Activated CD4-positive, alpha-beta memory T cell treated with anti-CD3 and anti-CD28 coated beads, Interleukin-2, amount 10 ng/mL, durations not matched to agents 7 days and 5 days (primary cell): ENCODE measurements at regions of chr1 and their contacts with region 1.

Region 1: GRCh38 chr1:66242646-66243547 is 291.1 kb upstream of the SGIP1 start:
- DNase-seq: peak; percentile 82
- H3K4me3 Mint-ChIP-seq: no peak overlapping the region
- H3K27ac Mint-ChIP-seq: no peak overlapping the region
- H3K4me1 Mint-ChIP-seq: peaks cover 3% of the 10 kb centered on the region
- H3K27me3 Mint-ChIP-seq: peaks cover 6% of the 10 kb centered on the region

Region 2: DNA sequence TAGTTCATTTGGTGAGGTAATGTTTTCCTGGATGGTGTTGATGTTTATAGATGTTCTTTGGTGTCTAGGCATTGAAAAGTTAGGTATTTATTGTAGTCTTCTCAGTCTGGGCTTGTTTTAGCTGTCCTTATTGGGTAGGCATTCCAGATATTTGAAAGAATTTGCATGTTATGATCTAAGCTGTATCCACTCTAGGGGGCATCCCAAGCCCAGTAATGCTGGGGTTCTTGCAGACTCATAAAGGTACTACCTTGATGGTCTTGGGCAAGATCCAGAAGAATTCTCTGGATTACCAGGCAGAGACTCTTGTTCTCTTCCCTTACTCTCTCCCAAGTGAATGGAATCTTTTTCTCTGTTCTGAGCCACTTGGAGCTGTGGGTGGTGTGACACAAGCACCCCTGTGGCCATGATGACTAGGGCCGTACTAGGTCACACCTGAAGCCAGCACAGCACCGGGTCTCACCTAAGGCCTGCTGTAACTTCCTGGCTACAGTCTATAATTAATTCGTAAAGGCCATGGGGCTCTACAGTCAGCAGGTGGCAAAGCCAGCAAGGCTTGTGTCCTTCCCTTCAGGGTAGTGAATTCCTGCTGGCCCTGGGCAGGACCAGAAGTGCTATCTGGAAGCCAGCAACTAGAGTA is 525.0 kb before region 1 on chr1:
- CTCF ChIA-PET with region 1: interaction called, 13 read pairs
- POLR2A ChIA-PET with region 1: no interaction called
- DNase-seq: peak; percentile 20
- H3K4me3 Mint-ChIP-seq: no peak overlapping the region
- H3K27ac Mint-ChIP-seq: no peak overlapping the region
- H3K4me1 Mint-ChIP-seq: no peaks in the 10 kb centered on the region
- H3K27me3 Mint-ChIP-seq: peaks cover 33% of the 10 kb centered on the region

Region 3: DNA sequence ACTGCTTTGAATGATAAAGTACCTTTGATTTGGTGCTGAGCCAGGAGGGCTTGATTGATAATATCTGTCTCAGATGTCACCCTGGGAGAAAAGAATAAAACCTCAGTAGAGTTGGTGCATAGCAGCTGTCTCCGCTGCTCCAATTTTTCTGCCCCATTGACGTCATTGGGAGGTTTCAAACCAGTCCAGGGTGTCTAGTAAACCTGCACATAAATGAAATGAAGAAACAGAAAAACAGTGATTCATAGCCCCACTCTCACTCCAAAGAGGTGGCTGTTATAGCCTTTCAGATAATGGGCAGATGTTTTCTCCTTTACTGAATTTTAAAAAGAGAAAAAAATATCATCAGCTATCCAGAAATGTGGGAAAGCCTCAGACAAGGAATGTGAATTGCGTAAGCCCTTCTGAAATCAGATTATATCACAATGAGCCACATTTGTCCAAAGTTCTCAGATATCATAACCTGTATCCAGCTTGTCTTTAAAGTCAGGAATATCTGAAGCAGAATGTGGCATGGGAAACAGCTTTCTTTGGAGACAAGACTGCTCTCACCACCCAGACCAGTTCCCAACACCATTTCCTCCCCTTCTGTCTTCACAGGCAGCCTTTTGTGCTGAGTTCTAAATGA is 60.2 kb before region 1 on chr1:
- CTCF ChIA-PET with region 1: interaction called, 16 read pairs
- POLR2A ChIA-PET with region 1: interaction called, 4 read pairs
- DNase-seq: peak; percentile 59
- H3K4me3 Mint-ChIP-seq: no peak overlapping the region
- H3K27ac Mint-ChIP-seq: peak overlapping the region; percentile 62
- H3K4me1 Mint-ChIP-seq: peaks cover 34% of the 10 kb centered on the region
- H3K27me3 Mint-ChIP-seq: peaks cover 3% of the 10 kb centered on the region

Region 4: GRCh38 chr1:66231217-66231616 is 11.7 kb before region 1 on chr1:
- CTCF ChIA-PET with region 1: interaction called, 33 read pairs
- POLR2A ChIA-PET with region 1: interaction called, 3 read pairs
- DNase-seq: no peak
- H3K4me3 Mint-ChIP-seq: no peak overlapping the region
- H3K27ac Mint-ChIP-seq: no peak overlapping the region
- H3K4me1 Mint-ChIP-seq: peaks cover 3% of the 10 kb centered on the region
- H3K27me3 Mint-ChIP-seq: peaks cover 8% of the 10 kb centered on the region

Region 5: DNA sequence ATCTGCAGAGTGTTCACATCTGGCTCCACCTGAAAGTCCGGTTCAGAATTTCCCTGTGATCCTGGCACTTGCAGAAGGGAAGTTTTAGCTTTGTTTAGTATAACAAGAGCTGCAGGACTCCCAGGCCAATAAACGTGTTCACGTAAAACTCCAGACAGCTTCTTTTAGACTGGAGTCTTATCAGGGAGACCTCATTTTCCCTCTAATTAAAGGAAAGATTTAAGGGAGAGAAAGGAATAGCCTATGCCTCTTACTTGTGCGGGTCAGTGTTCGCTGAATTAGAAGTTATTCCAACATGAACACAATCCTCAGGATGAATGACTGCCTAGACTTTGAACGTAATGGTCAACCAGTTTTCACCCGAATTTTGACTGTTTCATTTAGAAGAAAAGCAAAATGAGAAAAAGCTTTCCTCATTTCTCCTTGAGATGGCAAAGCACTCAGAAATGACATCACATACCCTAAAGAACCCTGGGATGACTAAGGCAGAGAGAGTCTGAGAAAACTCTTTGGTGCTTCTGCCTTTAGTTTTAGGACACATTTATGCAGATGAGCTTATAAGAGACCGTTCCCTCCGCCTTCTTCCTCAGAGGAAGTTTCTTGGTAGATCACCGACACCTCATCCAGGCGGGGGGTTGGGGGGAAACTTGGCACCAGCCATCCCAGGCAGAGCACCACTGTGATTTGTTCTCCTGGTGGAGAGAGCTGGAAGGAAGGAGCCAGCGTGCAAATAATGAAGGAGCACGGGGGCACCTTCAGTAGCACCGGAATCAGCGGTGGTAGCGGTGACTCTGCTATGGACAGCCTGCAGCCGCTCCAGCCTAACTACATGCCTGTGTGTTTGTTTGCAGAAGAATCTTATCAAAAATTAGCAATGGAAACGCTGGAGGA is 89.0 kb after region 1 on chr1:
- CTCF ChIA-PET with region 1: interaction called, 6 read pairs
- POLR2A ChIA-PET with region 1: interaction called, 27 read pairs
- DNase-seq: peak; percentile 63
- H3K4me3 Mint-ChIP-seq: peak overlapping the region; percentile 98
- H3K27ac Mint-ChIP-seq: peak overlapping the region; percentile 93
- H3K4me1 Mint-ChIP-seq: peaks cover 49% of the 10 kb centered on the region
- H3K27me3 Mint-ChIP-seq: no peaks in the 10 kb centered on the region

Region 6: GRCh38 chr1:66446261-66447001 is 203.5 kb after region 1 on chr1:
- CTCF ChIA-PET with region 1: interaction called, 422 read pairs
- POLR2A ChIA-PET with region 1: interaction called, 72 read pairs
- DNase-seq: peak; percentile 31
- H3K4me3 Mint-ChIP-seq: peak overlapping the region; percentile 75
- H3K27ac Mint-ChIP-seq: peak overlapping the region; percentile 93
- H3K4me1 Mint-ChIP-seq: peaks cover 29% of the 10 kb centered on the region
- H3K27me3 Mint-ChIP-seq: peaks cover 18% of the 10 kb centered on the region